MCF 10A (cell line): ENCODE measurements at regions of chr19 and their contacts with region 1.

Region 1: GRCh38 chr19:58499021-58499927 is 12.5 kb downstream of the SLC27A5 start:
- DNase-seq: peak; percentile 100
- H3K4me3 Mint-ChIP-seq: peak overlapping the region; percentile 83
- H3K27ac Mint-ChIP-seq: peak overlapping the region; percentile 86
- H3K4me1 Mint-ChIP-seq: peaks cover 17% of the 10 kb centered on the region
- H3K27me3 Mint-ChIP-seq: no peaks in the 10 kb centered on the region
- CTCF ChIP-seq: peak; percentile 11

Region 2: DNA sequence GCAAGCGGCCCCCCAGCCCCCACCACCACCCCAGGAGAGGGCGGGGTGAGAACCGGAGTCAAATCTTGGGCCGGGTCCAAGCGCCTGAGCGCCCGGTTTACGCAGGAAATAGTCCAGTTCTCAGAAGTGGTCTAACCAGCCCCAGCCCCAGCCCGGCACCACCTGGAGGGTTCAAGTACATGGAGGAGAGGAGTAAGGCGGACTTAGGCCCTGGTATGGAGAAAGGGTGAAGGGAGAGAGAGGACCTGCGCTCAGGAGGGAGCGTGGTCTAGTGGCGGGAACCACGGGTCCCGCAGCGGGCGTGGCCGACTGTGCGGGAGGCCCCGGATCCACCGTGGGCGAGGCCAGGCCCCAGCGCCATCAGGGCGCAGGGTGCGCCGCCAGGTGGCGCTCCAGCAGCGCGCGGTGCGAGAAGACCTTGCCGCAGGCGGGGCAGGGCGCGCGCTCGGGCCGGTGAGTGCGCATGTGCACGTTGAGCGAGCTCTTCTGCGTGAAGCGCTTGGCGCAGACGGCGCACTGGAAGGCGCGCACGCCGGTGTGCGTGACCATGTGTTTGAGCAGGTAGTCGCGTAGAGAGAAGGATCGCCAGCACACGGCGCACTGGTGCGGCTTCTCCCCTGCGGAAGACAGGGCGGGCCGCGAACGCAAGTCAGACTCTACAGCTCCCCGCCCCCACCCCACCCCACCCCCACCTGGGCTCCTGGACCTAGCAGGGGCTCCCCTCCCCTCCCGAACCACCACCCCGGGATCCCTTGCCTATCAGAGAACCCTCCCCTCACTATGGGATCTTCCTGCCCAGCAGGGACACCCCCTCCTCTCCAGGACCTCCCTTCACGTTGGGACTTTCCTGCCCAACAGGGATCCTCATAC is 14.7 kb after region 1 on chr19:
- CTCF ChIA-PET with region 1: interaction called, 21 read pairs
- POLR2A ChIA-PET with region 1: interaction called, 27 read pairs
- intact Hi-C with region 1: no loop called
- DNase-seq: peak; percentile 92
- H3K4me3 Mint-ChIP-seq: peak overlapping the region; percentile 77
- H3K27ac Mint-ChIP-seq: peak overlapping the region; percentile 86
- H3K4me1 Mint-ChIP-seq: peaks cover 14% of the 10 kb centered on the region
- H3K27me3 Mint-ChIP-seq: no peaks in the 10 kb centered on the region
- CTCF ChIP-seq: peak; percentile 97